ENCODE measurements at regions of chr12 and their contacts with region 1.

Region 1: GRCh38 chr12:92234533-92234932 is 88.9 kb upstream of the BTG1 start:
- DNase-seq: peak in 4 of 14 experiments; percentile 15 to 33 (median 20)
- ATAC-seq: peak; percentile 43
- H3K4me3 ChIP-seq: no peak overlapping the region
- H3K4me3 Mint-ChIP-seq: peak overlapping the region; percentile 18
- H3K27ac ChIP-seq: no peak overlapping the region
- H3K27ac Mint-ChIP-seq: peak overlapping the region; percentile 76
- H3K4me1 ChIP-seq: peaks cover 3% of the 10 kb centered on the region
- H3K4me1 Mint-ChIP-seq: peaks cover 40% of the 10 kb centered on the region
- H3K27me3 ChIP-seq: no peaks in the 10 kb centered on the region
- H3K27me3 Mint-ChIP-seq: no peaks in the 10 kb centered on the region
- CTCF ChIP-seq: no peak

Region 2: GRCh38 chr12:92289629-92290349 is 55.3 kb after region 1 on chr12:
- CTCF ChIA-PET with region 1: no interaction called
- POLR2A ChIA-PET with region 1: interaction called, 3 read pairs
- intact Hi-C with region 1: loop called in 1 of 2 experiments (anchors 5 kb)
- DNase-seq: no peak
- ATAC-seq: no peak
- H3K4me3 ChIP-seq: no peak overlapping the region
- H3K4me3 Mint-ChIP-seq: no peak overlapping the region
- H3K27ac ChIP-seq: no peak overlapping the region
- H3K27ac Mint-ChIP-seq: no peak overlapping the region
- H3K4me1 ChIP-seq: no peaks in the 10 kb centered on the region
- H3K4me1 Mint-ChIP-seq: peaks cover 31% of the 10 kb centered on the region
- H3K27me3 ChIP-seq: no peaks in the 10 kb centered on the region
- H3K27me3 Mint-ChIP-seq: no peaks in the 10 kb centered on the region
- CTCF ChIP-seq: no peak

Measured in CD4-positive, alpha-beta T cell (primary cell).